ENCODE measurements at regions of chr1 and their contacts with region 1.

Region 1: GRCh38 chr1:182781841-182782586 is 7.6 kb upstream of the NPL start:
- DNase-seq: peak; percentile 74 to 84
- ATAC-seq: peak; percentile 81 to 93 (median 86)
- H3K4me3 ChIP-seq: no peak overlapping the region
- H3K27ac ChIP-seq: no peak overlapping the region
- H3K4me1 ChIP-seq: peaks cover 3% of the 10 kb centered on the region
- H3K27me3 ChIP-seq: no peaks in the 10 kb centered on the region
- CTCF ChIP-seq: peak; percentile 81

Region 2: DNA sequence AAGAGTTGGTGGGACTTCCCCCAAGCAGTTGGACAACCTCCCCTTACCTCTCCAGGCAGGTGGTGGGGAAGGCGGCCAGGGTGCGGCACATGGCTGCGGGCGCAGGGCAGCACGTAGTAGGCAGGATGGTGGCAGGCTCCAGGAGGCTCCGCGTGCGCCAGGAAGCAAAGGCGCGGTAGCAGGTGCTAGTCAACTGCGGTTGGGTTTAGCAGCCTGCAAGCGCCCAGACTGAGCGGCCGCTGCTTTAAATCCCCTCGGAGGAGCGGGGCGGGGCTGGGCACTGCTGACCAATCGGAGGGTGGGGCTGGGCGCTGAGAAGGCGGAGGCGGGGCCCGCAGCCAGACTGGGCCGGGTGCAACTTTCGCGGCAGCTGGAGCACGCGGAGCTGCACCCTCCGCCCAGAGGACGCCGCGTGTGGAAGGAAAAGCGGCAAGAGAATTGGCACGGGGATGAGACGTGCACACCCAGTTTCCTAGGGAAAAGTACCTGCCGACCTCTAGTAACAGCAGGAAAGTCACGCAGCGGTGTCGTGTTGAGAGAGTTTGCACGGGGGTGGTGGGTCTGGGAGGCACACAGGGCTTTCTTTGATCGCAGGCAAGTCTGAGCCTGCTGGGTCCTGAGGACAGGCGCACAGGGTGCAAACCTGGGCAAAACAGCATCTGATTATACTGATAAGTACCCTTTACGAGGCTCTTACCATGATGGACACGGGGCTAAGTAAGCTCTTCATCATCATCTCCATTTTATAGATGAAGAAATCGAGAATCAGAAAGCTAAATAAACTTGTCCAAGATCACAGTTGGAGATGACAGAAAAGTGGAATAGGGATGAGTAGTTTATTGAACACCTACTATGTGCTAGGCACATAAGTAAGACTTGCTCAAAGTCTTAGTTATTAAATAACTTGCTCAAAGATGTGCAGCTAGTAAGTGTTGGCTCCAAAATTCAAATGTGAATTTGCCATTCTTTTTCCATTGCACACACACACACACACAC is 177.5 kb before region 1 on chr1 and contains the start of gene RGS16:
- intact Hi-C with region 1: loop called (anchors 1 to 2 kb)
- DNase-seq: peak; percentile 96
- ATAC-seq: peak; percentile 95 to 97 (median 95)
- H3K4me3 ChIP-seq: peak within 1 kb of the TSS; percentile 69
- H3K27ac ChIP-seq: peak within 1 kb of the TSS; percentile 74
- H3K4me1 ChIP-seq: peaks cover 31% of the 10 kb centered on the region
- H3K27me3 ChIP-seq: no peaks in the 10 kb centered on the region
- CTCF ChIP-seq: no peak
- total RNA-seq, gene RGS16: 1.2 to 17.5 (median 6.9) TPM